Activated T-helper 1 cell treated with anti-CD3 and anti-CD28 coated beads, Interleukin-12 subunit alpha, Interleukin-12 subunit beta, Interleukin-2, Interleukin-4 antibody, amounts not matched to agents 30 ng/mL and 10 ng/mL and 1 ng/mL, durations not matched to agents 14 hours and 24 hours and 36 hours (primary cell): ENCODE measurements at regions of chr1 and their contacts with region 1.

Region 1: GRCh38 chr1:147640553-147641165 is 29.7 kb downstream of the ACP6 start:
- DNase-seq: peak; percentile 73
- H3K4me3 Mint-ChIP-seq: no peak overlapping the region
- H3K27ac Mint-ChIP-seq: no peak overlapping the region
- H3K4me1 Mint-ChIP-seq: peaks cover 49% of the 10 kb centered on the region
- H3K27me3 Mint-ChIP-seq: no peaks in the 10 kb centered on the region

Region 2: DNA sequence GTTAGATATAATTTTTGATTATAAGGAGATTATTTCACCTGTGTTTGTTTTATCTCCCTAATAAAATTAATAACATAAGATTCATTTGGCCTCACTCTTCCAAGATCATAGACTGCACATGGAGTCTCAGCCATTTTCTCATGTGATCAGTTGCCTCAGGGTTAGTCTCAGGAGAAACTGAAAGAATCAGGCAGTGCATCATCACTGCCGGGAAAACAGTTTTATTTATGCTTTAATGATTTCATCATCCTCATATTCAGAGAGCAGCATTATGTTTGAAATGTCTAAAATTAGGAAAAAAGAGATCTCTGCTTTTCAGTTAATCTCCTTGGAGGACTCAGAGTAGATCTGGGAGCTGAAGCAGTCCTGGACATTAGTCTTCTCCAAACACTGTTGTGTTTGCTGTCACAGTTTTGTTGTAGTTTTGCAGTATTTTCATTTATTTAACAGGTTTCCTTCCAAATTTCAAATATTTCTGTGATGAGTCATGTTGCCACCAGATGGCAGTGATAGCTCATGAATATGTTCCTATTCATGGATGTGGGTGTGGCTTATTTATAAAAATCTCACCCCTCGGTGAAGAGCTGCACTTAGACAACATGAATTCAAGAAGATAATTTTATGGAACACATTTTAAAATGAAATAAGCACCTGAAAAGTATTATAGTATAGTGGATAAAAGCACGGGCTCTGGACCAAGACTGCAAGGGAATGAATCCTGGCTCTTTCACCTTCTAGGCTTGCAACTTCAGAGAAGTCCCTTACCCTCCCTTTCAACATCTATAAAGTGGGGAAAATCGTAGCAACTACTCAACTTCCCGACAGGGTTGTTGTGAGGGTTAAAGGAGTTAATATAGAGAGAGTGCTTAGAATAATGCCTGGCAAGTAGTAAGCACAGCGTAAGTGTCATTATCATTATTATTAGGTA is 367.0 kb before region 1 on chr1:
- intact Hi-C with region 1: loop called (anchors 5 kb)
- DNase-seq: peak; percentile 11
- H3K4me3 Mint-ChIP-seq: no peak overlapping the region
- H3K27ac Mint-ChIP-seq: no peak overlapping the region
- H3K4me1 Mint-ChIP-seq: no peaks in the 10 kb centered on the region
- H3K27me3 Mint-ChIP-seq: no peaks in the 10 kb centered on the region

Region 3: GRCh38 chr1:147515046-147515869 is 125.4 kb before region 1 on chr1:
- intact Hi-C with region 1: loop called (anchors 1 kb)
- DNase-seq: no peak
- H3K4me3 Mint-ChIP-seq: no peak overlapping the region
- H3K27ac Mint-ChIP-seq: no peak overlapping the region
- H3K4me1 Mint-ChIP-seq: peaks cover 7% of the 10 kb centered on the region
- H3K27me3 Mint-ChIP-seq: peaks cover 11% of the 10 kb centered on the region

Region 4: GRCh38 chr1:147599362-147600118 is 41.1 kb before region 1 on chr1:
- intact Hi-C with region 1: loop called (anchors 1 kb)
- DNase-seq: peak; percentile 89
- H3K4me3 Mint-ChIP-seq: peak overlapping the region; percentile 87
- H3K27ac Mint-ChIP-seq: peak overlapping the region; percentile 79
- H3K4me1 Mint-ChIP-seq: peaks cover 34% of the 10 kb centered on the region
- H3K27me3 Mint-ChIP-seq: peaks cover 20% of the 10 kb centered on the region

Region 5: DNA sequence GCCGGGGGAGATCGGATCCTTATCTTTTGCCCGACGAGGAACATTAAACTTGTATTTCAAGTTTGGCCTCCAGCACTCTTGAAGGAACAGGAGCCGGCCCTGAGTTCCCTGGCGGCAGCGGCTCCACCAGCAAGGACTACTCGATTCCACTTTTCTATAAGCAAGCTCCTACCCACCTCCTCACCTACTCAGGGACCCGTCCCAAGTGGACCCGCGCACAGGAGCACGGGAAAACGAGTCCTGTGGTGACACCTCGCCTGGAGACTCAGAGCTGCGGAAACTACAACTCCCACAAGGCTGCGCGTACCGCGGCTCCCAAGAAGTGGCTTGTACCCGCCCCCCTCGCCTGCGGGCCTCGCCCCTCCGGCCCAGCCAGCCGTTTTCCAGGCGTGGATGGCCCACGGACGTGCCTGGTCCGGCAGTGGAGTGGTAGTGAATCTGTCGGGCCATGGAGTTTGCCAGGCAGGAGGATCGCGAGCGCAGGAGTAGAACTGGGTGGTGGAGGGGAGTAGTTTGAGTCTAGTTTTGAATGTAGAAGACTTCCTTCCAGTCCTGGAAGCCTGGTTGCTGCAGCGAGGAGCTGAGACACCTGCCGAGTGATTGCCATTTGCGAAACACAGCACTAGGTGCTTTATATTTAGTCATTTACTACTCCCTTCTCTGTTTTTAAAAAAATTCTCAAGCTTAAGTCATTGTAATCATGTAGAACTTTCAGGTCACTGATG is 29.8 kb after region 1 on chr1 and contains the start of gene ACP6:
- intact Hi-C with region 1: loop called (anchors 1 kb)
- DNase-seq: peak; percentile 86
- H3K4me3 Mint-ChIP-seq: peak within 1 kb of the TSS; percentile 92
- H3K27ac Mint-ChIP-seq: peak within 1 kb of the TSS; percentile 88
- H3K4me1 Mint-ChIP-seq: peaks cover 24% of the 10 kb centered on the region
- H3K27me3 Mint-ChIP-seq: peaks cover 24% of the 10 kb centered on the region
- total RNA-seq, gene ACP6: 14.1 and 14.7 TPM in 2 replicates

Region 6: DNA sequence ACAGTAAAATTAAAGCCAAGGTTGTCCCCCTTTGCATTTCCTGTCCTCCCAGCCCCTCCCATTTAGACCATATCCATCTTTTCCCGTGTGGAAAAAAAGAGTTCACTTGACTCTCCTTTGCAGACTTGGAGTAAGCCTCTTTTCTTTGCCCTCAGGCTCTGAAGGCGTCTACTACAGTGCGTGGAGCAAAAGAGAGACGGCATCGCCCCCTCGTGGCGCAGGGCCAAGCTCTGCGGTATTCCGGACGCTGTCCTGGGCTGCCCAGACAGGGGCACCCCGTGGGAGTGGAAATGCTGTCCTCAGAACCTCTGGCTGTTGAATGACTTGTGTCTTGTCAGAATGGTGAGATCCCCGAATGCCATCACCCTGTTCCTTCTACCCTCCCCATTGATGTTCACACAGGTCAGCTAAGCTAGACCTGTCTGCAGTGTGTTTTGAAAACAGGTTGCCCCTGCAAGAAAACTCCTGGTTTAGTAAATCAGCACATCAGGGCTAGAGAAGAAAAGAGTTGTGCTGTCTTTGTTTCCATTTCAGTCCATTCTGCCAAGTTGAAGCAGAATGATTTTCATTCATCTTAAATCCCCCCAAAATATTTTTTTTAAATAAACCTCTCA is 249.6 kb after region 1 on chr1:
- intact Hi-C with region 1: loop called (anchors 1 kb)
- DNase-seq: peak; percentile 42
- H3K4me3 Mint-ChIP-seq: no peak overlapping the region
- H3K27ac Mint-ChIP-seq: no peak overlapping the region
- H3K4me1 Mint-ChIP-seq: no peaks in the 10 kb centered on the region
- H3K27me3 Mint-ChIP-seq: peaks cover 14% of the 10 kb centered on the region